ENCODE measurements at regions of chr14 and their contacts with region 1.

Region 1: DNA sequence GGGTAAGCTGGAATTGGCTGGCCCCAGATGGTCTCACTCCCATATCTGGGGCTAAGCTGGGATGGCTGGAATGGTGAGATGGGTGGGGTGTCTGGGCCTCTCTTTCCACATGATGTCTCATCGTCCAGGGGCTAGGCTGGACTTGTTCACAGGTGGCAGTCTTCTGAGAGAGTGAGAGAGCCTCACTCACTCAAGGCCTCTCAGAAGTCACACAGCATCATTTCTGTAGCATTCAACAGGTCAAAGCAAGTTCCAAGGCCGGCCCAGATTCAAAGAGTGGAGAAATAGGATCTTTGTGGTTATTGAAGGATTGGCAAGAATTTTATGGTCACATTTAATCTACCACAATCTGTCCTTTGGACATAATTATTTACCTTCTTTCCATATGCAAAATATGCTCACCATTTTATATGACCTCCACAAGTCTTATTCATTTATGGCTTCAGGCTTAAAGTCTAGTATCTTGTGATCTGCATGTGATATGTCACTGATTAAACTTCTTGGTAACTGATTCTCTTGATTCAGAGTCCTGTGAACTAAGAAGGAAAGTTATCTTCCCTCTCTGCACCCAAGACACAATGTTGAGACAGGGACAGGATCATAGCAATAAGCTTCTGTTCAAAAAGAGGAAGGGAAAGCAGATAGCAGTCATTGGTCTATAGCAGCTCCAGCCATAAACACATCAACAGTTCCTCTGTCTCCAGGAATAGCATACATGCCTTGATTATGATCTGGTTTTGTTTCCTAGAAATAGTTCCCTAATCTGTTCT is 102.9 kb downstream of the UNC79 start:
- DNase-seq: peak; percentile 47
- ATAC-seq: peak; percentile 92
- H3K4me3 ChIP-seq: no peak overlapping the region
- H3K27ac ChIP-seq: 0 out of 2 replicates have a peak overlapping the region, but pooled peaks have one; percentile 13
- H3K4me1 ChIP-seq: peaks cover 6% of the 10 kb centered on the region
- H3K27me3 ChIP-seq: no peaks in the 10 kb centered on the region
- CTCF ChIP-seq: no peak
- EP300 ChIP-seq: no peak; a peak in 2 of 4 replicates
- POLR2A ChIP-seq: no peak
- RAD21 ChIP-seq: no peak

Region 2: DNA sequence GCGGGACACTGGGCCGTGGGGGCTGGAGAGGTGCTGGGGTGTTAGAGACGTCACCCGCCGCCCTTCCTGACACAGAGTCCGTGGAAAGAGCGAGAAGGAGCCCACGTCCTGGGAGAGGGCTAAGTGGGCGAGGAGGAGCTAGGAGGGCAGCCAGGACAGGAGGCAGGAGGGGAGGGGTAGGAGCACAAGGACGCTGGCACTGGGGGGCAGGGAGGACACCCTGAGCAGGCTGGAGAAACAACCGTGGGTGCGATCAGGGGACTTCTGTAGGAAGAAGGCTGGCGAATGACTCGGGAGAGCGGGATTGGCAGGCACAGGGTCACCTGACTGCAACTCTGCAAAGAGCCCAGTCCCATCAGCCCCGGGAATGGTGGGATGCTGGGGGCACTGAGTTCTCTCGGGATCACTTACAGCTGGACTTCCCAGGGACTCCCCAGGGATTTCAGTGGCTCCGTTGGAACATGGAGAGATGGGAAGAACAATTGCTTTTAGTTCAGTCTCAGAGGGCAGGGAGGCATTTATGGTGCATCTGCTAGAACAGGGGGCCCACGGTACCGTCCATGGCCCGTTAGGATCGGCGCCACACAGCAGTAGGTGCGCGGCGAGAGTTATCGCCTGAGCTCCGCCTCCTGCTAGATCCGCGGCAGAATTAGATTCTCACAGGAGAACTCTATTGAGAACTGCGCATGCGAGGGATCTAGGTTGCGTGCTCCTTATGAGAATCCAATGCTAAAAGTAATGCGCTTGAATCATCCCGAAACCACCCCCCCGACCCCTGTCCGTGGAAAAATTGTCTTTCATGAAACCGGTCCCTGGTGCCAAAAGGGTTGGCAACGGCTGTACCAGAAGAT is 302.3 kb before region 1 on chr14:
- CTCF ChIA-PET with region 1: interaction called, 17 read pairs
- POLR2A ChIA-PET with region 1: no interaction called
- RAD21 ChIA-PET with region 1: interaction called, 3 read pairs
- SMC1A ChIA-PET with region 1: interaction called, 25 read pairs
- in situ Hi-C with region 1: loop called (anchors 25 kb)
- intact Hi-C with region 1: no loop called
- DNase-seq: no peak
- ATAC-seq: no peak
- H3K4me3 ChIP-seq: no peak overlapping the region; the same call in 1 of the 2 replicates
- H3K27ac ChIP-seq: no peak overlapping the region
- H3K4me1 ChIP-seq: no peaks in the 10 kb centered on the region; the same call in 1 of the 2 replicates
- H3K27me3 ChIP-seq: no peaks in the 10 kb centered on the region
- CTCF ChIP-seq: no peak
- EP300 ChIP-seq: no peak
- POLR2A ChIP-seq: no peak
- RAD21 ChIP-seq: no peak

Region 3: DNA sequence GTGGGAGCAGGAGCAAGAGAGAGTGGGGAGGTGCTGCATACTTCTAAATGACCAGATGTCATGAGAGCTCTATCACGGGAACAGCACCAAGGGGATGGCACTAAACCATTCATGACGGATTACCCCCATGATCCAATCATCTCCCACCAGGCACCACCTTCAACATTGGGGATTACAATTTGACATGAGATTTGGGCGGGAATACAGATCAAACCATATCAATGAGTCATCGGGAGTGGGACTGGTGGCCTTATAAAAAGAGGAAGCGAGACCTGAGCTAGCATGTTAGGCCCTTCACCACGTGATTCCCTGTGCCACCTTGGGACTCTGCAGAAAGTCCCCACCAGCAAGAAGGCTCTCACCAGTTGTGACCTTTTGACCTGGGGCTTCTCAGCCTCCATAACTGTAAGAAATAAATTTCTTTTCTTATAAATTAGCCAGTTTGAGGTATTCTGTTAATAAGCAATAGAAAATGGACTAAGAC is 157.9 kb before region 1 on chr14:
- CTCF ChIA-PET with region 1: interaction called, 3 read pairs
- POLR2A ChIA-PET with region 1: no interaction called
- RAD21 ChIA-PET with region 1: interaction called, 3 read pairs
- SMC1A ChIA-PET with region 1: no interaction called
- in situ Hi-C with region 1: no loop called
- intact Hi-C with region 1: loop called (anchors 5 kb)
- DNase-seq: peak; percentile 86
- ATAC-seq: peak; percentile 99
- H3K4me3 ChIP-seq: no peak overlapping the region
- H3K27ac ChIP-seq: peak overlapping the region; percentile 79
- H3K4me1 ChIP-seq: peaks cover 18% of the 10 kb centered on the region
- H3K27me3 ChIP-seq: no peaks in the 10 kb centered on the region
- CTCF ChIP-seq: no peak
- EP300 ChIP-seq: peak; percentile 89 to 93
- POLR2A ChIP-seq: no peak
- RAD21 ChIP-seq: no peak

Region 4: GRCh38 chr14:93606091-93606490 is 72.4 kb after region 1 on chr14:
- CTCF ChIA-PET with region 1: no interaction called
- POLR2A ChIA-PET with region 1: no interaction called
- RAD21 ChIA-PET with region 1: no interaction called
- SMC1A ChIA-PET with region 1: no interaction called
- in situ Hi-C with region 1: no loop called
- intact Hi-C with region 1: no loop called
- DNase-seq: no peak
- ATAC-seq: no peak
- H3K4me3 ChIP-seq: no peak overlapping the region
- H3K27ac ChIP-seq: no peak overlapping the region
- H3K4me1 ChIP-seq: no peaks in the 10 kb centered on the region
- H3K27me3 ChIP-seq: no peaks in the 10 kb centered on the region
- CTCF ChIP-seq: no peak
- EP300 ChIP-seq: no peak
- POLR2A ChIP-seq: no peak
- RAD21 ChIP-seq: no peak

Measured in GM12878 (cell line).